HEK293 (cell line): ENCODE measurements at regions of chr1 and their contacts with region 1.

Region 1: GRCh38 chr1:9101510-9102146 is 27.3 kb downstream of the GPR157 start:
- H3K4me3 ChIP-seq: no peak overlapping the region
- H3K27ac ChIP-seq: no peak overlapping the region
- H3K4me1 ChIP-seq: no peaks in the 10 kb centered on the region
- CTCF ChIP-seq: peak; percentile 46; the same call in 1 of the 2 replicates

Region 2: GRCh38 chr1:8911416-8911815 is 190.2 kb before region 1 on chr1:
- CTCF ChIA-PET with region 1: interaction called, 14 read pairs
- POLR2A ChIA-PET with region 1: no interaction called
- H3K4me3 ChIP-seq: no peak overlapping the region
- H3K27ac ChIP-seq: no peak overlapping the region
- H3K4me1 ChIP-seq: peaks cover 6% of the 10 kb centered on the region
- CTCF ChIP-seq: no peak

Region 3: DNA sequence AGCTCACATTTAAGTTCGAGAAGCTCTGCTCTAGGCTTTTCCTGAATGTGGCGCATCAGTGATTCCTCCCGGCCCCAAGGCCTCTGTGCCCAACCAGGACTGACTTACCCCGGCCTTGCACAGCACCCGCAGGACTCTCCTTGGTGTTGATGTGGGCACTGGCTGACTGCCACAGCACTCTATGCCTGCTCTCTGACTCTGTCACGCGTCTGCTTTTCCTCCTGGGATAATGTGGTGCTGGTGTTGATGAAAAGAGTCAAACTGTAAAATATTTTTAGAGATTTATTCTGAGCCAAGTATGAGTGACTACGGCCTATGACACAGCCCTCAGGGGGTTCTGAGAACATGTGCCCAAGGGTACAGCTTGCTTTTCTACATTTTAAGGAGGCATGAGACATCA is 16.7 kb before region 1 on chr1:
- CTCF ChIA-PET with region 1: interaction called, 12 read pairs
- POLR2A ChIA-PET with region 1: no interaction called
- H3K4me3 ChIP-seq: no peak overlapping the region
- H3K27ac ChIP-seq: no peak overlapping the region
- H3K4me1 ChIP-seq: peaks cover 4% of the 10 kb centered on the region; the same call in 1 of the 2 replicates
- CTCF ChIP-seq: no peak